H1 (cell line): ENCODE measurements at regions of chr14 and their contacts with region 1.

Region 1: GRCh38 chr14:65958664-65959562 is 527.3 kb upstream of the CCDC196 start:
- DNase-seq: peak in 1 of 2 experiments; percentile 50
- H3K4me3 ChIP-seq: no peak overlapping the region
- H3K27ac ChIP-seq: no peak overlapping the region
- H3K4me1 ChIP-seq: peaks cover 3 to 13% (median 9%) of the 10 kb centered on the region in 4 experiments
- H3K27me3 ChIP-seq: no peaks in the 10 kb centered on the region
- CTCF ChIP-seq: peak in 2 of 3 experiments; percentile 45 to 58; a peak in 2 of 4 replicates
- EP300 ChIP-seq: no peak
- POLR2A ChIP-seq: no peak
- RAD21 ChIP-seq: peak; percentile 61 to 72

Region 2: DNA sequence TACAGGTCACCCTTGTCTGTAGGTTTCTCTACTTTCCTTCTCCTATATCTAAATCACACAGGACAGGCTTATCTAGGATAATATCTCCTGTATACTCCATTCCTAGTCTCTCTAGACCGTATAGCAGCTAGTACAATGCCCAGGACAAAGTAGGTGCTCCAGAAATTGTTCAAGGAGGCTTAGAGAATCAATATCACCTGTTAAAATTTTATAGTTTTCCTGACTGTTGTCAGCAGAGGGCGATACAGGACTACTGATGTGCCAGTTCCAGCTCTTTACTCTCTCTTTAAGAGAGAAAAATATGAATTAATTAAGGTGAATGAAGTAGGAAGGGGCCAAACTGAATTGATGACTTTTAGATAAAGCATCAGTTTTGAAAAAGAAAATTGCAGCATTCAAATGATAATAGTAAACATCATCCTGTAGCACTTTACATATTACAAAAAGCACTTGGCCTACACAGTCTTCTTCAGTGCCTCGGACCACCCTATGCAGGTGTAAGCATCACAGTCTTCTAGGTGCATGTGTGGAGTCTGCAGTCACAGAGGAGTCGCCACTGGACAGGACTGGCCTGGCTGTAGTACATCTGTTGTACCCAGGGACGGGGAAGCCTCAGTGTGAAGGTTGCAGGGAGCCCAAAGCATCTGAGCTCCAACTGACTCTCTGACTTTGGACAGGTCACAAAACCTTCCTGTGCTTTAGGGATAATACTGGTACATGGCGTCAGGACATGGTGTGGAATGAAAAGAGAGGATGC is 794.7 kb before region 1 on chr14:
- CTCF ChIA-PET with region 1: interaction called, 31 read pairs
- POLR2A ChIA-PET with region 1: no interaction called
- DNase-seq: no peak
- H3K4me3 ChIP-seq: no peak overlapping the region
- H3K27ac ChIP-seq: no peak overlapping the region
- H3K4me1 ChIP-seq: no peaks in the 10 kb centered on the region
- H3K27me3 ChIP-seq: no peaks in the 10 kb centered on the region
- CTCF ChIP-seq: peak in 2 of 3 experiments; percentile 47 to 52; a peak in 2 of 4 replicates
- EP300 ChIP-seq: no peak
- POLR2A ChIP-seq: no peak
- RAD21 ChIP-seq: peak; percentile 88

Region 3: GRCh38 chr14:65791191-65791981 is 167.5 kb before region 1 on chr14:
- CTCF ChIA-PET with region 1: interaction called, 20 read pairs
- POLR2A ChIA-PET with region 1: no interaction called
- DNase-seq: no peak
- H3K4me3 ChIP-seq: no peak overlapping the region
- H3K27ac ChIP-seq: no peak overlapping the region
- H3K4me1 ChIP-seq: peaks cover 0 to 3% (median 0%) of the 10 kb centered on the region in 4 experiments; a peak in 4 of 7 replicates
- H3K27me3 ChIP-seq: no peaks in the 10 kb centered on the region
- CTCF ChIP-seq: no peak
- EP300 ChIP-seq: no peak
- POLR2A ChIP-seq: no peak
- RAD21 ChIP-seq: no peak

Region 4: GRCh38 chr14:65927931-65928356 is 31.0 kb before region 1 on chr14:
- CTCF ChIA-PET with region 1: interaction called, 11 read pairs
- POLR2A ChIA-PET with region 1: no interaction called
- DNase-seq: no peak
- H3K4me3 ChIP-seq: no peak overlapping the region
- H3K27ac ChIP-seq: no peak overlapping the region
- H3K4me1 ChIP-seq: peaks cover 3 to 13% (median 9%) of the 10 kb centered on the region in 4 experiments; a peak in 4 of 7 replicates
- H3K27me3 ChIP-seq: no peaks in the 10 kb centered on the region; a peak in 1 of 7 replicates
- CTCF ChIP-seq: no peak
- EP300 ChIP-seq: no peak
- POLR2A ChIP-seq: no peak
- RAD21 ChIP-seq: no peak

Region 5: DNA sequence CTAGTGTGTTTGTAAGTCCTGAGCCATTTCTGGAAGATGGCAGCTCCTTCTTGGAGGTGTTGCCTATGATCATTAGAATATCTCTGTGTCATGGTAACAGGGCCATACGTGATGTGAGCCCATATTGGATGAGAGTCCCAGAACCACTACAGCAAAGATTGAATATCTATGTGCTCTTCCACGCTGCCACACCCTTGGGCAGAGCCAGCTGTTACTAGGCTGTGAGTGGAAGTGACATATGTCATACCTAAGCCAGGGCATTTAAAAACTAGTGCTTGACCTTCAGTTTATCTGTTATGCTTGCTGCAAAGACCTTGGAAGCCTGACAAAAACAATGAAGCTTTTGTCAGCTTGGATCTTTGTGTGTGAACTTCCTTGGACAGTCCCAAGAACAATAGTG is 32.2 kb after region 1 on chr14:
- CTCF ChIA-PET with region 1: interaction called, 13 read pairs
- POLR2A ChIA-PET with region 1: no interaction called
- DNase-seq: no peak
- H3K4me3 ChIP-seq: no peak overlapping the region
- H3K27ac ChIP-seq: no peak overlapping the region
- H3K4me1 ChIP-seq: peaks cover 0 to 11% (median 5%) of the 10 kb centered on the region in 4 experiments; a peak in 3 of 7 replicates
- H3K27me3 ChIP-seq: no peaks in the 10 kb centered on the region
- CTCF ChIP-seq: no peak
- EP300 ChIP-seq: no peak
- POLR2A ChIP-seq: no peak
- RAD21 ChIP-seq: no peak

Region 6: DNA sequence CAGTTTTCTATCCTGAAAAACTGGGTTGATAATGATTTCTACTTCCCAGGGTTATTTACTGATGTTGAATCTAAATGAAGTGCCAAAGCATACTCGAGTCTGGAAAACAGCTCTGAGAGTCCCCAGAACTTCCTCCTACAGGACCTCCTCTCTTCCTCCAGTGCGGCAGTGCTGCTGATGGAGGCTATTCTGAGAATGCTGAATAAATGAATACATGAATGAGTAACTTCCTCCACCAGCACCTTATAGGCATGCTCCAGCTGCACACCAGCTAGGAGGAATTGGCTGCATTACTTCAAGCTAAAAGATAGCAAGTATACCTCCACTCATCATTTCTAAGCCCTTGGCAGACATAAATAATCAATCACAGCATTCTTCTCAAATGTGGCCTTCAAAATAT is 78.4 kb after region 1 on chr14:
- CTCF ChIA-PET with region 1: interaction called, 11 read pairs
- POLR2A ChIA-PET with region 1: no interaction called
- DNase-seq: no peak
- H3K4me3 ChIP-seq: no peak overlapping the region
- H3K27ac ChIP-seq: no peak overlapping the region
- H3K4me1 ChIP-seq: peaks cover 0 to 2% (median 0%) of the 10 kb centered on the region in 4 experiments; a peak in 1 of 7 replicates
- H3K27me3 ChIP-seq: no peaks in the 10 kb centered on the region
- CTCF ChIP-seq: no peak
- EP300 ChIP-seq: no peak
- POLR2A ChIP-seq: no peak
- RAD21 ChIP-seq: no peak

Region 7: GRCh38 chr14:66076176-66076575 is 117.3 kb after region 1 on chr14:
- CTCF ChIA-PET with region 1: interaction called, 56 read pairs
- POLR2A ChIA-PET with region 1: no interaction called
- DNase-seq: no peak
- H3K4me3 ChIP-seq: no peak overlapping the region
- H3K27ac ChIP-seq: no peak overlapping the region
- H3K4me1 ChIP-seq: no peaks in the 10 kb centered on the region
- H3K27me3 ChIP-seq: no peaks in the 10 kb centered on the region
- CTCF ChIP-seq: no peak
- EP300 ChIP-seq: no peak
- POLR2A ChIP-seq: no peak
- RAD21 ChIP-seq: no peak